IMR-90 (cell line): ENCODE measurements at regions of chr19 and their contacts with region 1.

Region 1: GRCh38 chr19:16170134-16170533 is 3.2 kb downstream of the CIB3 start:
- DNase-seq: no peak
- ATAC-seq: no peak
- H3K4me3 ChIP-seq: no peak overlapping the region
- H3K27ac ChIP-seq: no peak overlapping the region
- H3K4me1 ChIP-seq: no peaks in the 10 kb centered on the region
- H3K27me3 ChIP-seq: no peaks in the 10 kb centered on the region; the same call in 1 of the 2 replicates
- CTCF ChIP-seq: no peak
- POLR2A ChIP-seq: no peak
- RAD21 ChIP-seq: no peak

Region 2: DNA sequence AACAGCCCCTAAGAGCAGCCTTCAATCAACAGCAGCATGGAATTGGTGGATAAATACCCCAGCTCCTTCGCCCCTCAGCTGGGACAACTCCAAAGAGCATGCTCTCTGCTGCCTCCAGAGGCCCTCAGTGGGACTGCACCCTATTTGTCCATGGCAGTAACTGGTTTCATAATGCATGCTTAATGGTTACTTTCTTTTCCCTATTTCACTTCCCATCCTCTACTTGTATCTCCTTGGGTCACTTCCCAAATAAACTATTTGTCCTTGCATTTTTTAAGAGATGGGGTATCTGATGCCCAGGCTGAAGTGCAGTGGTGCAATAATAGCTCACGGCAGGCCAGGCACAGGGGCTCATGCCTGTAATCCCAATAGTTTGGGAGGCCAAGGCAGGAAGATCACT is 107.3 kb before region 1 on chr19:
- CTCF ChIA-PET with region 1: no interaction called
- POLR2A ChIA-PET with region 1: no interaction called
- dilution Hi-C with region 1: no loop called
- in situ Hi-C with region 1: no loop called
- intact Hi-C with region 1: no loop called
- DNase-seq: no peak
- ATAC-seq: no peak
- H3K4me3 ChIP-seq: no peak overlapping the region
- H3K27ac ChIP-seq: no peak overlapping the region
- H3K4me1 ChIP-seq: peaks cover 14% of the 10 kb centered on the region
- H3K27me3 ChIP-seq: no peaks in the 10 kb centered on the region
- CTCF ChIP-seq: peak; percentile 63
- POLR2A ChIP-seq: no peak
- RAD21 ChIP-seq: peak; percentile 31; the same call in 1 of the 2 replicates

Region 3: DNA sequence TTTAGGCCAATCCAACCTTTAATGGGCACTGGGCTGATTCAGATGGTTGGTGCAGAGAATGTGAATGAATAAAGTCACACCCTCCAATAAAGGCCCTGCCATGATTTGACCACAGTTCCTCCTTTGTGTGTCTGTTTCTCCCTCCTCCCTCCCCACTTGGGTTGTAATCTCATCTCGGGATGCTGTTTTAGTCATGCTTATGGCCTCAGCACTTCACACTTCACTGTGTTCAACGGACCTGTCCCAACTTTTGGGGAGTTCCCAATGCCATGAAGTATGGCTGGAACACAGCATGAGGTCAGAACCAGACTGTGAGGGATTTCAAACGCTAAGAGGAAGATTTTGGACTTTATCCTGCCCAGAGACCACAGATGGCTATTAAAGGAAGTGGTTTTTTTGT is 64.0 kb before region 1 on chr19:
- CTCF ChIA-PET with region 1: no interaction called
- POLR2A ChIA-PET with region 1: interaction called, 21 read pairs
- dilution Hi-C with region 1: no loop called
- in situ Hi-C with region 1: no loop called
- intact Hi-C with region 1: no loop called
- DNase-seq: peak; percentile 53
- ATAC-seq: peak; percentile 16
- H3K4me3 ChIP-seq: no peak overlapping the region
- H3K27ac ChIP-seq: no peak overlapping the region
- H3K4me1 ChIP-seq: peaks cover 2% of the 10 kb centered on the region; the same call in 1 of the 2 replicates
- H3K27me3 ChIP-seq: no peaks in the 10 kb centered on the region
- CTCF ChIP-seq: no peak
- POLR2A ChIP-seq: no peak
- RAD21 ChIP-seq: no peak